HEK293 (cell line): ENCODE measurements at regions of chr9 and their contacts with region 1.

Region 1: DNA sequence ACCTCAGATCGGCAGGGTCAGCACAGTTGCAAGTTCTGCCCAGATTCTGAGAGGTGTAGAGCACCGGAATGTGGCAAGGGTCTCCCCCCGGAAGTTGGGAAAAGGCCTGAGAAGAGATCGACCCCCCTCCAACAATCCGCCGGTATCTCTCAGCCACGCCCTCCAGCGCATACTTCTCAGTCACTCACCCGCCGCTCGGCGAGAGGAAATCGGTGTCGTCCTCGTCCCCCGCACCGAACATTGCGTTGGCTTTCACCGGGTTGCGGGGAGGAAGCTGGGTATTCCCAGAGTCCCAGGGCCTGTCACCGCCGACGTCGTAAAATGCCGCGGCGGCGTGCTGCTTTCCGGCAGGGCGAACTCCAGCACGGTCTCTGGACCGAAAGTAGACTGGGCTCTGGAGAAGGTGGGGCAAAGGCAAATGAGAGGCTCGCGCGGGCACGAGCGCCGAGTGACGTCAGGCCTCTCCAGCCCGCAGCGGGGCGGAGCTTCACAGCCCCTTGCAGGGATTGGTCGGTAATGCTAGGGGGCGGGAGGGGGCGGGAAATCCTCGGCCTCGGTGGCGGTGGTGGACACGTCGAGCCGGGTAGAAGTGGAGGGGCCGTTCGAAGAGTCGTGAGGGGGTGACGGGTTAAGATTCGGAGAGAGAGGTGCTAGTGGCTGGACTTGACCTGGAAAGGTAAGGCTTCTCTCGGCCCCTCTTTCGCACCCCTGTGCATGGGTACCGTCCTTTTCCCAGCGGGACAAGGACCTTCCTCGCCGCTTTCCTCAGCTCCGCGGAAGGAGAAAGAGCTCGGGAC is at the starts of genes FKBP15 and SLC31A1:
- H3K4me3 ChIP-seq: peak within 1 kb of the TSS; percentile 80
- H3K27ac ChIP-seq: peak within 1 kb of the TSS; percentile 48
- H3K4me1 ChIP-seq: 0 out of 2 replicates have a peak, but pooled peaks cover 3% of the 10 kb centered on the region
- CTCF ChIP-seq: no peak

Region 2: GRCh38 chr9:113150670-113151611 is 70.3 kb before region 1 on chr9 and contains the start of gene SLC31A2:
- CTCF ChIA-PET with region 1: no interaction called
- POLR2A ChIA-PET with region 1: interaction called, 20 read pairs
- H3K4me3 ChIP-seq: peak within 1 kb of the TSS; percentile 77
- H3K27ac ChIP-seq: no peak within 1 kb of the TSS
- H3K4me1 ChIP-seq: no peaks in the 10 kb centered on the region
- CTCF ChIP-seq: peak; percentile 74; the same call in 1 of the 2 replicates

Region 3: DNA sequence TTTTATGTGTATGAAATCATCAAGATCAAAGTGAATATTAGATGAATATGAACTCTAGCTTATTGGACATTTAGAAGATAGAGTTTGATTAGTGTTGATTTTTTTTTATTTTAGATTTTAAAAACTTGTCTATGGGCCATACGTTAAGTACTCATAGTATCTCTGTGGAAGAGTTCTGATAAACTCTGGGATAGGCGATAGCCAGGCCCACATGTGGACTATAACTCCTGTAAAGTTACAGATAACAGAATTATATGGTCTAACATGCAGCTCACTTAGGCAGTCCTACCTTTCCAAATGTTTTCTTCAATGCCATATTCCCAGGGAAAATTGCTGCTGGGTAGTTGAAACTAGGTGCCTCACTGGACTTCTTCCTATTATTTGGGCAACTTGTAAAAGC is 10.5 kb after region 1 on chr9:
- CTCF ChIA-PET with region 1: interaction called, 12 read pairs
- POLR2A ChIA-PET with region 1: interaction called, 15 read pairs
- H3K4me3 ChIP-seq: no peak overlapping the region
- H3K27ac ChIP-seq: no peak overlapping the region
- H3K4me1 ChIP-seq: no peaks in the 10 kb centered on the region
- CTCF ChIP-seq: no peak

Region 4: DNA sequence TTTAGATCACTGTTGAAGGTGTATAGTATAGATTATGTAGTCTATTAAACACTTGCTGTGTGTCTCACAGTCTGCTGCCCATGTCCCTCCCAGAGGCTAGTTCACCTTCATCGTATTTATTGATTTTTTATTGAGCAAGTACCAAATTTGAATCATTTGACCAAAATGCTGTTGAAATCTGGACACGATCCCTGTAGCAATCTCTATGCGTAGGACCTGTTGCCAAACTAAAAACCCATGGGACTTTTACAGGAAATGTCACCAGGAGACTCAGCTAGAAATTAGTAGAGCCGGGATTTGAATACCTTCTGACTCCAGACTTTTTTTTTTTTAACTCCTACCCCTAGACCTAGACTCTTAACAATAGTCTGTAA is 17.6 kb after region 1 on chr9:
- CTCF ChIA-PET with region 1: interaction called, 3 read pairs
- POLR2A ChIA-PET with region 1: interaction called, 20 read pairs
- H3K4me3 ChIP-seq: no peak overlapping the region
- H3K27ac ChIP-seq: no peak overlapping the region
- H3K4me1 ChIP-seq: no peaks in the 10 kb centered on the region
- CTCF ChIP-seq: no peak

Region 5: GRCh38 chr9:113340017-113340699 is 119.0 kb after region 1 on chr9 and contains the start of gene WDR31:
- CTCF ChIA-PET with region 1: interaction called, 3 read pairs
- POLR2A ChIA-PET with region 1: interaction called, 12 read pairs
- H3K4me3 ChIP-seq: peak within 1 kb of the TSS; percentile 82
- H3K27ac ChIP-seq: peak within 1 kb of the TSS; percentile 57
- H3K4me1 ChIP-seq: 0 out of 2 replicates have a peak, but pooled peaks cover 4% of the 10 kb centered on the region
- CTCF ChIP-seq: 0 out of 2 replicates have a peak, but pooled peaks have one; percentile 18